PC-3 (cell line): ENCODE measurements at regions of chr16 and their contacts with region 1.

Region 1: DNA sequence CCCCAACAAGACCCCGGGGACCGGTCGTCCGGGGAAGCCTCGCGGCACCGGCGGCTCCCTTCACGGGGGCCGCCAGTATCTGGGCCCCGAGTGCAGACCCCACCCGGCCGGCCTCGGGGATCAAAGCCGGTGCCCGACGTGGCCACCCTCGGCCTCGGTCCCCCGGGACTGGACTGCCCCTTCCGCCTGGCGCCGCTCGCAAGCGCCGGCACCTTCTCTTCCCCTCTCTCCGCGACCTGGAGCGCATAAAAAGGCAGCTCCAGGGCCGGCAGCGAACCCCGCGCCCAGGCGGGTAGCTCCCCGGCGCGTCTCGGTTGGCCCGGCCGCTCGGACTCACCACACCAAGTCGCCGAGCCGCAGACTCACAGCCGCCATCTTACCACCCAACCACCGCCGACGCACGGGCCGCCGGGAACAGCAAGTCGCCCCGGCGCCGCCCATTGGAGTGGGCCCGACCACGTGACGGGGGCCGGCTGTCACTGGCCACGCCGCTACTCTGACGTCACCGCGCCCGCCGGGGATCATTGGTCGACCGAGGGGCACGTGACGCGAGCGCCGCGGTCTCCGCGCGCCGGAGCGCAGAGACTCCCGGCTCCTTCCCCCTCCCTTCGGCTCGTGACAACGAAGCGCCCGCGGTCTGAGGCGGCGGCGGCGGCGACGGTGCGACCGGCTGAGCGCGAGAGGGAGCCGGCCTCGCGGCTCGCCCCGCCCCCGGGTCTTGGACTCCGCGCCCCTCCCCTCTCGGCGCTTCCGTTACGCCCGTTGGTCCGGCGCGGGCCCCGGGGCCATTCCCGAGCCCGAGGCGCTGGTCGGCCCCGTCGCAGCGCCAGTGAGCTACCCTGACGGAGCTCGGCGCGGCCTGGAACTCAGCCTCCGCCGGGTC is at the starts of genes GLYR1 and UBN1:
- DNase-seq: peak; percentile 94
- ATAC-seq: peak; percentile 82
- H3K4me3 ChIP-seq: peak within 1 kb of the TSS; percentile 97
- H3K27ac ChIP-seq: peak within 1 kb of the TSS; percentile 55
- H3K4me1 ChIP-seq: peaks cover 21% of the 10 kb centered on the region
- H3K27me3 ChIP-seq: no peaks in the 10 kb centered on the region
- CTCF ChIP-seq: no peak
- total RNA-seq, gene GLYR1: 30.6 and 41.2 TPM in 2 replicates
- total RNA-seq, gene UBN1: 21.4 and 21.9 TPM in 2 replicates

Region 2: DNA sequence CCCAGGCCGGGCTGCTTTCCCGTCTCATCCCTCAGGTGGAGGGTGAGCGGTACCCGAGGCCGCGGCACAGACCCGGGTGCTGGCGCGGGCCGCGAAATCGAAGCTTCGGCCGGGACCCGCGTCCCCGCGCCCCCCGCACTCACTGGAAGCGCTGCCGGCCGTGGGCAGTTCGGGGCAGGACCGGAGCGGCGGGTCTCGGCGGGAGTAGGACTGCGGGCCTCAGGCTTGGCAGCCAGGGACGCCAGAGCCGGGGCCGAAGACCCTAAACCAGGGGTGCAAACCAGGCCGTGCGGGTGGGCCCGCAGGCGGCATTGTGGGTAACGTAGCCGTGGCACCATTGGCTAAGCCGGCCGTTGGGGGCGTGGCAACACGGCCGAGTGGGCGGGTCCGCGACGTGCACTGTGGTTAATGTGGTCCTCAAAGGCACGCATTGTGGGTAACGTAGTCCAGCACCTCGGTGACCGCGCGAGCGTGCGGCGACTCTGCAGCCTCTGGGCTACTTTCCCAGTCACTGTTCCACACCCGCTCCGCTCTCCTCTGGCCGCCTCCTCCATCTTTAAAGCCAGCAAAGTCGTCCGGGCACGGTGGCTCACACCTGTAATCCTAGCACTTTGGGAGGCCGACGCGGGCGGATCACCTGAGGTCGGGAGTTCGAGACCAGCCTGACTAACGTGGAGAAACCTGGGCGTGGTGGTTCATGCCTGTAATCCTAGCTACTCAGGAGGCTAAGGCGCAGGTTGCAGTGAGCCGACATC is 80.1 kb before region 1 on chr16 and contains the start of gene ZNF500:
- CTCF ChIA-PET with region 1: no interaction called
- POLR2A ChIA-PET with region 1: no interaction called
- intact Hi-C with region 1: no loop called
- DNase-seq: peak; percentile 94
- ATAC-seq: peak; percentile 91
- H3K4me3 ChIP-seq: peak within 1 kb of the TSS; percentile 95
- H3K27ac ChIP-seq: no peak within 1 kb of the TSS; the same call in 1 of the 2 replicates
- H3K4me1 ChIP-seq: peaks cover 15% of the 10 kb centered on the region
- H3K27me3 ChIP-seq: no peaks in the 10 kb centered on the region
- CTCF ChIP-seq: no peak
- total RNA-seq, gene ZNF500: 8.6 and 10.4 TPM in 2 replicates

Region 3: GRCh38 chr16:4802659-4803287 is 44.4 kb before region 1 on chr16:
- CTCF ChIA-PET with region 1: no interaction called
- POLR2A ChIA-PET with region 1: interaction called, 10 read pairs
- intact Hi-C with region 1: no loop called
- DNase-seq: peak; percentile 82
- ATAC-seq: peak; percentile 91
- H3K4me3 ChIP-seq: peak overlapping the region; percentile 84
- H3K27ac ChIP-seq: no peak overlapping the region; the same call in 1 of the 2 replicates
- H3K4me1 ChIP-seq: peaks cover 14% of the 10 kb centered on the region
- H3K27me3 ChIP-seq: no peaks in the 10 kb centered on the region
- CTCF ChIP-seq: no peak

Region 4: GRCh38 chr16:4944333-4945281 is 97.5 kb after region 1 on chr16:
- CTCF ChIA-PET with region 1: no interaction called
- POLR2A ChIA-PET with region 1: no interaction called
- intact Hi-C with region 1: loop called (anchors 2 kb)
- DNase-seq: peak; percentile 93
- ATAC-seq: peak; percentile 67
- H3K4me3 ChIP-seq: peak overlapping the region; percentile 38; the same call in 1 of the 2 replicates
- H3K27ac ChIP-seq: peak overlapping the region; percentile 92
- H3K4me1 ChIP-seq: peaks cover 37% of the 10 kb centered on the region
- H3K27me3 ChIP-seq: no peaks in the 10 kb centered on the region
- CTCF ChIP-seq: no peak

Region 5: GRCh38 chr16:4957720-4958509 is 110.8 kb after region 1 on chr16 and contains the start of gene SEC14L5:
- CTCF ChIA-PET with region 1: no interaction called
- POLR2A ChIA-PET with region 1: no interaction called
- intact Hi-C with region 1: loop called (anchors 1 kb)
- DNase-seq: peak; percentile 95
- ATAC-seq: peak; percentile 79
- H3K4me3 ChIP-seq: peak within 1 kb of the TSS; percentile 68
- H3K27ac ChIP-seq: peak within 1 kb of the TSS; percentile 2; the same call in 1 of the 2 replicates
- H3K4me1 ChIP-seq: 0 out of 2 replicates have a peak, but pooled peaks cover 8% of the 10 kb centered on the region
- H3K27me3 ChIP-seq: no peaks in the 10 kb centered on the region
- CTCF ChIP-seq: no peak; the same call in 1 of the 2 replicates
- total RNA-seq, gene SEC14L5: not detected in 2 replicates